Activated CD4-positive, alpha-beta memory T cell treated with anti-CD3 and anti-CD28 coated beads for 36 hours (primary cell): ENCODE measurements at regions of chr4 and their contacts with region 1.

Region 1: DNA sequence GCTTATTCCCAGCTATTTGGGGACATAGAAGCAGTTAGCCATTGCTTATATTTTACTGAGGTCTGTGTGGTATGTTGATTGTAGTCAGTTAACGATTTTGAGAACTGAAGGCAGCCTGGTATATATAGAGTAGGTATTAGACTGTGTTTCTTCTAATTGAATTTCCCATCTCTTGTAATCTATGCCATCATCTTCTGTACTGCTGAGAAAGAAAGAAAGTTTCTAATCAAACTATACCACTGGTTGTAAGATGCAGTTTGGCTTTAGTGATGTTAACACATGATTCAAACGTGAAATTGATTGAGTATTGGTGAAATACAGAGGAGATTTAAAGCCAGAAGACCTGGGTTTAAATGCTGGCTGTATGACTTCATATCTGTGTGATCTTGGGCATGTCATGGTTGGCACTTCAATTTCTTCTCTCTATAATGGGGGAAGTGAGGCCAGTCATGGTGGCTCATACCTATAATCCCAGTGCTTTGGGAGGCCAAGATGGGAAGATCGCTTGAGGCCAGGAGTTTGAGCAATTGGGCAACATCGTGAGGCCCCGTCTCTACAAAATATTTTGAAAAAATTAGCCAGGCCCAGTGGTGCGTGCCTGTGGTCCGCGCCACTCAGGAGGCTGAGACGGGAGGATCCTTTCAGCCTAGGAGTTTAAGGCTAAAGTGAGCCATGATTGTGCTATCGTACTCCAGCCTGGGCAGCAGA is 11.6 kb downstream of the HTT start:
- DNase-seq: no peak
- H3K4me3 Mint-ChIP-seq: peak overlapping the region; percentile 41
- H3K27ac Mint-ChIP-seq: peak overlapping the region; percentile 73
- H3K4me1 Mint-ChIP-seq: peaks cover 56% of the 10 kb centered on the region
- H3K27me3 Mint-ChIP-seq: no peaks in the 10 kb centered on the region

Region 2: GRCh38 chr4:2787230-2788088 is 298.6 kb before region 1 on chr4:
- CTCF ChIA-PET with region 1: no interaction called
- POLR2A ChIA-PET with region 1: no interaction called
- intact Hi-C with region 1: no loop called
- DNase-seq: peak; percentile 72
- H3K4me3 Mint-ChIP-seq: peak overlapping the region; percentile 12
- H3K27ac Mint-ChIP-seq: peak overlapping the region; percentile 92
- H3K4me1 Mint-ChIP-seq: peaks cover 60% of the 10 kb centered on the region
- H3K27me3 Mint-ChIP-seq: no peaks in the 10 kb centered on the region

Region 3: GRCh38 chr4:3074078-3074795 is 11.9 kb before region 1 on chr4 and contains the starts of genes HTT and HTT-AS:
- CTCF ChIA-PET with region 1: no interaction called
- POLR2A ChIA-PET with region 1: no interaction called
- intact Hi-C with region 1: loop called (anchors 1 kb)
- DNase-seq: peak; percentile 98
- H3K4me3 Mint-ChIP-seq: peak within 1 kb of the TSS; percentile 89
- H3K27ac Mint-ChIP-seq: peak within 1 kb of the TSS; percentile 88
- H3K4me1 Mint-ChIP-seq: peaks cover 24% of the 10 kb centered on the region
- H3K27me3 Mint-ChIP-seq: no peaks in the 10 kb centered on the region
- total RNA-seq, gene HTT: 57.6 to 69.8 TPM
- total RNA-seq, gene HTT-AS: not detected

Region 4: GRCh38 chr4:3098346-3098745 is 12.2 kb after region 1 on chr4:
- CTCF ChIA-PET with region 1: no interaction called
- POLR2A ChIA-PET with region 1: no interaction called
- intact Hi-C with region 1: no loop called
- DNase-seq: no peak
- H3K4me3 Mint-ChIP-seq: no peak overlapping the region
- H3K27ac Mint-ChIP-seq: no peak overlapping the region
- H3K4me1 Mint-ChIP-seq: peaks cover 3% of the 10 kb centered on the region
- H3K27me3 Mint-ChIP-seq: no peaks in the 10 kb centered on the region

Region 5: GRCh38 chr4:3257556-3258482 is 171.7 kb after region 1 on chr4:
- CTCF ChIA-PET with region 1: no interaction called
- POLR2A ChIA-PET with region 1: no interaction called
- intact Hi-C with region 1: no loop called
- DNase-seq: no peak
- H3K4me3 Mint-ChIP-seq: no peak overlapping the region
- H3K27ac Mint-ChIP-seq: no peak overlapping the region
- H3K4me1 Mint-ChIP-seq: no peaks in the 10 kb centered on the region
- H3K27me3 Mint-ChIP-seq: no peaks in the 10 kb centered on the region